ENCODE measurements at regions of chr17 and their contacts with region 1.

Region 1: DNA sequence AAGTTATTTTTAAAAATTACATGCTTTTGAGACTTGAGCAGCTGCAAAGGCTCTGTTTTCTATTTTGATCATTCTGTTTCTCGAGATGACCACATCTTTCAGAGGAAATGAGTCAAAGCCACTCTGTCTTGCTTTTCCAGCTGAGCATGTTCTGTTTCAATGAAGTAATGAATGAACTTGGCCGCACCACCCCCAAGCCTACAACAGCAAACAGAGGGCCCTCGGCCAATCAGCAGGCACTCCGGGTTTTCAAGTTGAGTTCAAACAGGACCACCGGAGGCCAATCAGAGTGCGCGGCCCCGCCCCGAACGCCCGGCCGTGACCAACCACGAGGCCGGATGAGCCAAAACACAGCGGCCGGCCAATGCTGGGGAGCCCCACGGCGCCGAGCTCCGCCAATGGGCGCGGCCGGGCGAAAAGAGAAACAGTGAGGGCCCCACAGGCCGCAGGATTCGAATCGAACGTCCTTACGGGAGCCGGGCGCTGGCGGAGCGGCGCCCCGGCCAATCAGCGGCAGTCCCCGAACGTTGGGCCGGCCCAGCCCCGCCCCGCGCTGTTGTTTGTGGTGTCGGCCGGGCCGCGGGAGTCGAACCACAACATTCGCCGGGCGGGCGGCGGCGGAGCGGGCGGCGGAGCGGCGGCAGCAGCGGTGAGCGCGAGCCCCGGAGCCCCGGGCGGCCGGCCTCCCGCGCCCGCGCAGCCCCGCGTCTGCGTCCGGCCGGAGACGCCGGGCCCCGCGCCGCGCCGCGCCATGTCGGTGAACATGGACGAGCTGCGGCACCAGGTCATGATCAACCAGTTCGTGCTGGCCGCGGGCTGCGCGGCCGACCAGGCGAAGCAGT is at the start of gene UBALD2:
- DNase-seq: peak; percentile 99
- ATAC-seq: peak; percentile 93 to 97 (median 96)
- H3K4me3 ChIP-seq: peak within 1 kb of the TSS; percentile 72 to 98 (median 94)
- H3K27ac ChIP-seq: peak within 1 kb of the TSS; percentile 89 to 98 (median 94)
- H3K4me1 ChIP-seq: peaks cover 26 to 83% (median 60%) of the 10 kb centered on the region in 9 donors
- H3K27me3 ChIP-seq: no peaks in the 10 kb centered on the region
- CTCF ChIP-seq: no peak
- total RNA-seq, gene UBALD2: 22.2 to 50.7 (median 27.6) TPM

Region 2: DNA sequence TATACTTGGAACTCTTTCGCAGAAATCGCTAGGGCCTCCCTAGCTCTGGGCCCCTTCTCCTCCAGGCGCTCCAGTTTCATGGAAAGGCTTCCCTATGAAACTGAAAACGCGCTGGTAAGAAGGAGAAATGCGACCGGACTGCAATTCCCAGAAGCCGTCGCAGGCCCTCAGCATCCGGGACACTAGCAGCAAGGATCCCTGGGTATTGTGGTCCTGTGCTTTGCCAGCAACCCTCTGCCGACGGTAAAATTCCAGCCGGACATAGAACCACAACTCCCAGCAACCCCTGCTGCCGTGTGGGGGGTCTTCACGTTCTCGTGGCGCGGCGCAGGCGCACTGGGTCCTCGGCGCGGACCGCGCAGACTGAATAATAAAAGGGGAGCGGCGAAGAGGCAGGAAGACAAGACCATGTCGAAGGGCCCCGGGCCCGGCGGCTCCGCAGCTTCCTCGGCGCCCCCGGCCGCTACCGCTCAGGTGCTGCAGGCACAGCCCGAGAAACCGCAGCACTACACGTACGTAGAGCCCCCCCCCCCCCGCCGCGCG is 480.4 kb before region 1 on chr17 and contains the start of gene UNK:
- intact Hi-C with region 1: loop called in 1 of 10 experiments (anchors 5 kb)
- DNase-seq: peak; percentile 94 to 99
- ATAC-seq: peak; percentile 91 to 95 (median 93)
- H3K4me3 ChIP-seq: peak within 1 kb of the TSS; percentile 51 to 78 (median 70)
- H3K27ac ChIP-seq: peak within 1 kb of the TSS; percentile 97 to 100 (median 99)
- H3K4me1 ChIP-seq: peaks cover 7 to 73% (median 39%) of the 10 kb centered on the region in 9 donors
- H3K27me3 ChIP-seq: no peaks in the 10 kb centered on the region
- CTCF ChIP-seq: no peak
- total RNA-seq, gene UNK: 11.6 to 19.1 (median 14.7) TPM

Region 3: DNA sequence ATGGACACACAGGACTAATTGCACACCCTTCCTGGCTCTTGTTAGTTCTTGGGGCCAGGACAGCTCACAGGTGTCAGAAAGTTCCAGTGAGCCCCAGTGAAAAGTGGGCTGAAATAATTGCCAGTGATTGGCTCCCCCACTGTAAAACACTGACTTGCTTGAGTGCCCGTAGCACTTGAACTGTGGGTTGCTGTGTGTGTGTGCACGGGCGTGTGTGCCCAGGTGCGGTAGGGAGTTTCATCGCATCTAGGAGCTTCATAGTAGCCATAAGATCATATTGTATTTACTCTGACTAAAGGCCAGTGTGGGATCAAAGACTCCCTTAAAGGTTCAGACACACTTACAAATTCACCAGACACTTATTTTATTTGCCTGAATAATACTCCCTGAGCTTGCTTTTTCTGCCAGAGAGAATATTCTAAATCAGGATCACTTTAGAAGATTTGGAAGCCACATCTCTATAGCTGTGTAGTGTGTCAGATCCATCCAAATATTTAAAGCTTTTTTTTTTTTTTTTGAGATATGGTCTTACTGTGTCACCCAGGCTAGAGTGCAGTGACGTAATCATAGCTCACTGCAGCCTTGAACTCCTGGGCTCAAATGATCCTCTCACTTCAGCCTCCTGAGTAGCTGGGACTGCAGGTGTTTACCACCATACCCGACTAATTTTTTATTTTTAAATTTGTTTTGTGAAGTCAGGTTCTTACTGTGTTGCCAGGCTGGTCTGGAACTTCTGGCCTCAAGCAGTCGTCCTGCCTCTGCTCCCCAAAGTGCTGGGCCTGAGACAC is 469.0 kb before region 1 on chr17:
- intact Hi-C with region 1: no loop called
- DNase-seq: no peak
- ATAC-seq: no peak
- H3K4me3 ChIP-seq: no peak overlapping the region
- H3K27ac ChIP-seq: no peak overlapping the region
- H3K4me1 ChIP-seq: peaks cover 0 to 13% (median 0%) of the 10 kb centered on the region in 9 donors
- H3K27me3 ChIP-seq: no peaks in the 10 kb centered on the region
- CTCF ChIP-seq: no peak

Region 4: GRCh38 chr17:76196675-76197074 is 68.3 kb before region 1 on chr17:
- intact Hi-C with region 1: loop called in 1 of 10 experiments (anchors 5 kb)
- DNase-seq: peak; percentile 24 to 73
- ATAC-seq: peak in 7 of 8 donors; percentile 66 to 93 (median 81)
- H3K4me3 ChIP-seq: no peak overlapping the region
- H3K27ac ChIP-seq: peak overlapping the region in 3 of 10 donors; percentile 23 to 63 (median 45)
- H3K4me1 ChIP-seq: peaks cover 0 to 33% (median 24%) of the 10 kb centered on the region in 9 donors
- H3K27me3 ChIP-seq: no peaks in the 10 kb centered on the region
- CTCF ChIP-seq: peak in 1 of 9 donors; percentile 32

Region 5: DNA sequence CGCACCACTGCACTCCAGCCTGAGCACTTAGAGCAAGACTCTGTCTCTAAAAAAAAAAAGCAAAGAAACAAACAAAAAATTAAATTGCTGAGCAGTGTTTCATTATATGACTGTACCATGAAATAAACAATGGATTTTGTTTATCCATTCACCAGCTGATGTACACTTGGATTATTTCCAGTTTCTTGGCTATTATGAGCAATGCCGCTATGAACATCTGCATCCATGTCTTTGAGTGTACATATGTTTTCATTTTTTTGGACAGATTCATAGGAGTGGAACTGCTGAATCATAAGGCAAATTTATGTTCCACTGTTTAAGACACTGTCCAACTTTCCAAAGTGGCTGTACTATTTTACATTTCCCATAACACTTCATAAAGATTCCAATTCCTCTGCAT is 32.6 kb before region 1 on chr17:
- intact Hi-C with region 1: no loop called
- DNase-seq: no peak
- ATAC-seq: no peak
- H3K4me3 ChIP-seq: no peak overlapping the region
- H3K27ac ChIP-seq: no peak overlapping the region
- H3K4me1 ChIP-seq: no peaks in the 10 kb centered on the region
- H3K27me3 ChIP-seq: no peaks in the 10 kb centered on the region
- CTCF ChIP-seq: no peak

Region 6: DNA sequence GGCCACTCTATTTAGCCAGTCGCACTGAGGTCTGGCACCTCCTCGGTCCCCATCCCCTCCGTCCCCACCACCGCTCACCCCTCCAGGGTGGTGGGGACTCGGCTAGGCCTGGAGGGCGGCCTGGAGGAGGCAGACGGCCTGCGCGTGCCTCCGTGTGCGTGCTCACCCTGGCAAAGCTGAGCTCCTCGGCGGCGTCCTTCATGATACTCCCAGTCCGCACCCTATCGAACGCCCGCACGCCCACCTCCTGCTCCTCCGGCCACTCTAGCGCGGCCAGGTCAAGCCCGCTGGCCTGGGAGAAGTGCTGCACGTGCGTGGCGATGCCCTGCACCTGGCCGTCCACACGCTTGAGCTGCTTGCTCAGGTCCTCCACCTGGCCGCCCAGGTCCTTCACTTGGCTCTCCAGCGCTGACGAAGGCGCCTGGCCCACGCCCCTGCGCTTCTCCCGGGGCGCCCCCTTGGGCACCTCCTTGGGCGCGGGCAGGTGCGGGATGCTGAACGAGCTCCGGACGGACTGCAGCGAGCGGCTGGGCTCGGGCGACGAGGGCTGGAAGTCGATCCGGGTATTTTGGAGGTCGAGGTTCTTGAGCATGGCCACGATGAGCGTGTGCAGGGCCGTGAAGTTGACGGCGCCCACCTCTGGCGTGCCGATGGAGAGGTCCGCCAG is 42.5 kb after region 1 on chr17:
- intact Hi-C with region 1: no loop called
- DNase-seq: no peak
- ATAC-seq: peak in 4 of 8 donors; percentile 6 to 51 (median 27)
- H3K4me3 ChIP-seq: no peak overlapping the region
- H3K27ac ChIP-seq: no peak overlapping the region
- H3K4me1 ChIP-seq: peaks cover 0 to 3% (median 0%) of the 10 kb centered on the region in 9 donors
- H3K27me3 ChIP-seq: no peaks in the 10 kb centered on the region
- CTCF ChIP-seq: no peak